CD8-positive, alpha-beta memory T cell (primary cell): ENCODE measurements at regions of chr13 and their contacts with region 1.

Region 1: DNA sequence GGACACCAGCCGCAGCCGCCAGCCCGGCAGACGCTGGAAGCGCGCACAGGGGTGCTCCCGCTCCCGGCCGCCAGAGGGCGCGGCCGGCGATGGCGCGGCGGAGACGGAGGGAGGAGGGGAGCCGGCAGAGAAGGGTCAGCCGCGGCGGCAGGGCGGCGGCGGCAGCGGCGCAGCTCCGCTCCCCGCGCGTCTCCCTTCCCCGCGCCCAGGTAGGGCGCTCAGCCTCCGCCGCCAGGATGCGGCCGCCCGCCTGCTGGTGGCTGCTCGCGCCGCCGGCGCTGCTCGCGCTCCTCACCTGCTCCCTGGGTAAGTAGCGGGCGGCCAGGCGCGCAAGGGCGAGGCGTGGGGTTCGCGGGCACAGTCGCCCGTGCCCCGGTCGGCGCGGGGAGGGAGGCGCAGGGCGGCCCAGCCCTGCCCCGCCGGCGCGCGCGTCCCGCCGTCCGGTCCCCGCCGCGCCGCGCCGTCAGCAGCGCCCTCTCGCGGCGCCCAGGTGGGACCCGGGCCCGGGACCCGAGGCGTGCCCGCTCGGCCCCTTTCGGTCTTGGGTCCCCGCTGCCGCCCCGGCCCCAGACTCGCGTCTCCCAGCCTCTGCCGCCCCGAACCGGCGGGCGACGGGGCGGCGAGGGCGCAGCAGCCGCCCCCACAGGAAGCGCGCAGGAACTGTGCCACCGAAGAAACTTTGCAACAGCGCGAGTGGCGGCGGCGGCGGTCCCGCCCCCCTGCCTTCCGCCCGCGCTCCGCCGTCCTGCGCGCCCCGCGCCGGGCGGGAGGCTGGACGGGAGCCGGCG is at the start of gene B3GLCT:
- DNase-seq: peak; percentile 71 to 86 (median 84)
- H3K4me3 ChIP-seq: peak within 1 kb of the TSS; percentile 41
- H3K4me3 Mint-ChIP-seq: peak within 1 kb of the TSS; percentile 79 to 92 (median 86)
- H3K27ac ChIP-seq: peak within 1 kb of the TSS; percentile 83
- H3K27ac Mint-ChIP-seq: peak within 1 kb of the TSS; percentile 88 to 98 (median 94)
- H3K4me1 ChIP-seq: peaks cover 10% of the 10 kb centered on the region
- H3K4me1 Mint-ChIP-seq: peaks cover 24 to 28% (median 25%) of the 10 kb centered on the region in 3 donors
- H3K27me3 ChIP-seq: no peaks in the 10 kb centered on the region
- H3K27me3 Mint-ChIP-seq: no peaks in the 10 kb centered on the region
- total RNA-seq, gene B3GLCT: 5.2 to 5.6 TPM

Region 2: DNA sequence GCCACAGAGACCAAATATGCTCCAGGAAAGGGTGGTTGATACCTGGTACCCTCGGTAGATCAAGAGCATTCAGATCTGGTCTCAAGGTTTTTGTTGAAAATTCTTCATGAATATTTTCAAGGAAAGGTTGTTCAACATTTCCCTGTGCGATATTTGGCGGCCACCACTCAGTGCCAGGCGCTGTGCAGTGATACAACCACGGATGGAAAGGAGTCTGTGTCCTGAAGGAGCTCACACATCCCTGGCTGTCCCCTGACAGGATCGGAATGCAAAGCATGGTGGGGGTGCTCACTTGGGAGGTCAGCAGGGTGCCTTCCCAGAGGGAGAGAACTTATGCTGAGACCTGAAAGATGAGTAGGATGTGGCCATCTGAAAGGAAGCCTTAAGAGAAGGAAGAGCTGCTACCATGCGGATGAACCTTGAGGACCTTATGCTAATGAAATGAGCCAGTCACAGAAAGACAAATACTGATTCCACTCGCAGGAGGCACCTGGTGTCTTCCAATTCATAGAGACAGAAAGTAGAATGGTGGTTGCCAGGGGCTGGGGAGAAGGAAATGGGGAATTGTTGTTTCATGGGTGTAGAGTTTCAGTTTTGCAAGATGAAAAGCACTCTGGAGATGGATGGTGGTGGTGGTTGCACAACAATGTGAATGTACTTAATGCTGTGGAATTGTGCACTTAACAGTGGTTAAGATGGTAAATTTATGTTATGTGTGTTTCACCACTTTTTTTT is 79.9 kb before region 1 on chr13:
- CTCF ChIA-PET with region 1: no interaction called
- POLR2A ChIA-PET with region 1: no interaction called
- DNase-seq: no peak
- H3K4me3 ChIP-seq: no peak overlapping the region
- H3K4me3 Mint-ChIP-seq: no peak overlapping the region
- H3K27ac ChIP-seq: no peak overlapping the region
- H3K27ac Mint-ChIP-seq: no peak overlapping the region
- H3K4me1 ChIP-seq: no peaks in the 10 kb centered on the region
- H3K4me1 Mint-ChIP-seq: no peaks in the 10 kb centered on the region
- H3K27me3 ChIP-seq: peaks cover 4% of the 10 kb centered on the region
- H3K27me3 Mint-ChIP-seq: peaks cover 19 to 67% of the 10 kb centered on the region in 2 donors

Region 3: DNA sequence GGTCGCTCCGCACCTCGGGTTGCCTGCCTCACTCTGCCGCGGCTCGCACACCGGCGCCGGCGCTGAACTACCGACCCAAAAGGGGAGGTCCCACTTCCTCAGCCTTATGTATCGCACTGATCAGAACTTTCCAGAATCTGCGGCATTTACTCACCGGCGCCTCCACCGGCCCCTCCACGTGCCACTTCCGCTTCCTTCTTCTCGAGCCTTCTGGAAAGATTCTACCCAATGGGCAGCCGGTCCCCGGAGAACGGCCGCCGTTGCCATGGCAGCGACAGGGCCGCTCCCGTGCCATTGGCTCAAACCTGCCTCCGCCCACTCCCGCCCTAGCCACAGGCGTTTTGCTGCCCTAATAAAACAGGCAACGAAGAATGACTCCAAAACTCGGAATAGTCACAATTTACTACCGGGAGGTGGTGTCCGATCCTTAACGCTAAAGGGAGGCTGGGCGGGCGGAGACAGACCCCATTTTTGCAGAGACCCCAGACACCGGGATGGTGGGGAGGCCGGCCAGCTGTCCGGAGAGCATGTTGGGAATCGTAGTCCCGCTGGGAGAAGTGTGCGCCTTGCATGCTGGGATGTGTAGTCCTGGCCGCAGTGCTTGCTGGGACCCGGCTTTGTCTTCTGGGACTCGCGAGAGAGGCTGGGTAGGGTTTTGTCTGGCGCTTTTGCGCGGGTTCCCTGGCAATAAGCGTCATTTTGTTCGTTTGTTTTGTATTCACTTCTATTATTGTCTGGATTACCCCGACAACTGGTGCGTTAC is 38.0 kb before region 1 on chr13 and contains the start of gene HSPH1:
- CTCF ChIA-PET with region 1: interaction called, 4 read pairs
- POLR2A ChIA-PET with region 1: interaction called, 10 read pairs
- DNase-seq: peak; percentile 96 to 100 (median 99)
- H3K4me3 ChIP-seq: peak within 1 kb of the TSS; percentile 98
- H3K4me3 Mint-ChIP-seq: peak within 1 kb of the TSS; percentile 90 to 99 (median 96)
- H3K27ac ChIP-seq: peak within 1 kb of the TSS; percentile 97
- H3K27ac Mint-ChIP-seq: peak within 1 kb of the TSS; percentile 96 to 100 (median 99)
- H3K4me1 ChIP-seq: peaks cover 18% of the 10 kb centered on the region
- H3K4me1 Mint-ChIP-seq: peaks cover 39 to 49% (median 48%) of the 10 kb centered on the region in 3 donors
- H3K27me3 ChIP-seq: no peaks in the 10 kb centered on the region
- H3K27me3 Mint-ChIP-seq: peaks cover 0 to 4% of the 10 kb centered on the region in 2 donors
- total RNA-seq, gene HSPH1: 316 to 329 TPM